ENCODE measurements at regions of chr20 and their contacts with region 1.

Region 1: DNA sequence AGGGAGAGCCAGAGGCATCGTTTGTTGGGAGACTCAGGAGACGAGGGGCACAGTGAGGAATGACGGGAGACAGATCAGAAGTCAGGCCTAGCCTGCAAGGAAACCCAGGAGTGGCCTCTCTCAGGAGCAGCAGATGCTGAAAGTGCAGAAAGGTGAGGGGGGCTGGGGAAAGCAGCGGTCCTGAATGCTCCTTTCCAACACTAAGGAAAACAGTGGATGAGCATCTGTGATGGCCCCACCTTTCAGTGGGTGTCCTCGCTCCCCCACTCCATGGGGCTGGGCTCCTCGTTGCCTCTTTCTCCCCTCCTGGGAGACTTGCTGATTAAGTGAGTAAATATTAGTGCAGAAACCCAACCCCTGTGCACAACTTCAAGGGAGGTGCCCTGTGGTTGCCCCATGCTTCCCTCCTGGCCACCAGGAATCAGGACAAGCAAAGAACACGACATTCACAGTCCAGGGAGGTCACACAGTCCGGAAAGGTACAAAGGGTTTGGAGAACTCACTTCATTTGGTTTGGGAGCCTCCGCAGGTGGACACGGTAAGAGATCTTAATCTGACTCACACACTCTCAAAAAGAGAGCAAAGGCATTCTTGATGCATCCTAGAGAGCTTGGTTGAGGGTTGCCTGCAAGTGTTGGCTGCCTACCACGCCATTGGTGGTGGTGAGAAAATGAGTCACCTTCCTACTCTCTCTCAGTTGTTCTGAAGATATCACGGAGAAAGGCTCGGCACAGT is 9.7 kb upstream of the BPIFB1 start:
- DNase-seq: no peak

Region 2: GRCh38 chr20:33259371-33259770 is 13.9 kb before region 1 on chr20:
- intact Hi-C with region 1: loop called in 1 of 2 experiments (anchors 2 kb)
- DNase-seq: no peak

Measured in posterior vena cava (tissue), 2 donors.